Activated B cell treated with CpG ODN at 0.5 μM for 24 hours (primary cell): ENCODE measurements at regions of chr14 and their contacts with region 1.

Region 1: DNA sequence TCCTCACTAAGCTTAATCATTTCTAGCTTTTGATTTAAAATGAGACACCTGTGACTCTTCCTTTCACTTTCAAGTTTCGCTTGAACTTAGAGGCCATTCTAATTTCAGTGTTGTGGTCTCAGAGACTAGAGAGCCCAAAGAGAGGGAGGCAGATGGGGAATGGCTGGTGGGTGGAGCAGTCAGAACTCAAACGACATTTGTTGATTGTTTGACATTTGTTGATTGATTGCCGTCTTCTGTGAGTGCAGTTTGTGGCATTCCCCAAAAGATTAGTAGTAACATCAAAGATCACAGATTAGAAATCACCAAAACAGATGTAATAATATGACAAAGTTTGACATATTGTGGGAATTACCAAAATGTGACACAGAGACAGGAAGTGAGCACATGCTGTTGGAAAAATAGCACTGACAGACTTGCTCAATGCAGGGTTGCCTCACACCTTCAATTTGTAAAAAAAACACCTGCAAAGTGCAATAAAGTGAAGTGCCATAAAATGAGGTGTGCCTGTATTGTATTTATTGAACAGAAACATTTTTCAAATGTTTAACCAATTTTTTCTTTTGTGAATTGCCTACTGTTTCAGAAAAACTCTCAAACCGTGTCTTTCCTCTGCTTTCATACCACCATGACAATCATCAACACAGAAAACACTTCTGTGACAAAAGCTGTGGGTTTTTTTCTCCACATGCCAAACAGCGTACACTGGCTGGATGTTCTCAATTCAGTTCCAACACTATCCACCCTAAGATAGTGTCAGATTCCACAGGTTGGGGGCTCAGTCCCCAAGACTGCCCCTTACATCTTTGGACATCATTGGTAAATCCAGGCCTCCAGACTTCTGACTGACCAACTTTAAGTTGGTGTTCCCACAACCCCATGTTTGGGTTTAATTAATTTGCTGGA is 376.3 kb upstream of the RGS6 start:
- DNase-seq: no peak
- ATAC-seq: peak; percentile 94
- H3K4me3 Mint-ChIP-seq: peak overlapping the region; percentile 79
- H3K27ac Mint-ChIP-seq: peak overlapping the region; percentile 97
- H3K4me1 Mint-ChIP-seq: peaks cover 76% of the 10 kb centered on the region
- H3K27me3 Mint-ChIP-seq: no peaks in the 10 kb centered on the region
- CTCF ChIP-seq: no peak

Region 2: GRCh38 chr14:71497645-71498086 is 58.2 kb before region 1 on chr14:
- CTCF ChIA-PET with region 1: interaction called, 3 read pairs
- POLR2A ChIA-PET with region 1: interaction called, 3 read pairs
- intact Hi-C with region 1: loop called (anchors 2 kb)
- DNase-seq: no peak
- ATAC-seq: peak; percentile 87
- H3K4me3 Mint-ChIP-seq: peak overlapping the region; percentile 8
- H3K27ac Mint-ChIP-seq: peak overlapping the region; percentile 57
- H3K4me1 Mint-ChIP-seq: peaks cover 36% of the 10 kb centered on the region
- H3K27me3 Mint-ChIP-seq: no peaks in the 10 kb centered on the region
- CTCF ChIP-seq: no peak

Region 3: DNA sequence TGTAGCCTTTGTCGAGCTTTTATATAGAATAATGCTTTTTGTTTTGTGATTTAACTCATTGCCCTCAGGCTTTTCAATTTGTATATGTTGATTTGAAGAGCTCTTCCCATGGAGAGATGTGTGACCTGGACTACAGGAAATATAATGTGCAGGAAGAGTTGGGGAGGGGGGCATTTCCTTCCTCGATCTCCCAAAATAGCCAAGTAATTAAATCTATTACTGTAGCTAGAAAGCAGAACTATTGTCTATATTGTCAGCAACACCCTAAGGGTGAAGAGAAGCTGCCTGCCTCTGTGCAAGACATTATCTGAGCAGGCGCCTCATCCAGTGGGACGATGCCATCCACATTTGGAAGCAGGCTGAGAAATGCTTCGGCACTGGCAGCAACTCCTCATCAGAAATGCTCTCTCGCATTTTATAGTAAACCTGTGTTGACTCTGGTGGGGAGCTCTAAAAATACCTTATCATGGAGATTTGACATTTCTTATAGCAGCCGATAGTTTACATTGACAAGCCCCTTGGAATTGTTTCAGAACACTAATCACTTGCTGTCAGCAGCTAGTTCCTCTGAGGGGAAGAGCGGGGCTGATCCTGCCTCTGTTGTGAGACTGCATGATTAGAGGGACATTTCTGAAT is 16.1 kb before region 1 on chr14:
- CTCF ChIA-PET with region 1: interaction called, 4 read pairs
- POLR2A ChIA-PET with region 1: no interaction called
- intact Hi-C with region 1: loop called (anchors 2 kb)
- DNase-seq: no peak
- ATAC-seq: no peak
- H3K4me3 Mint-ChIP-seq: peak overlapping the region; percentile 53
- H3K27ac Mint-ChIP-seq: peak overlapping the region; percentile 38
- H3K4me1 Mint-ChIP-seq: peaks cover 58% of the 10 kb centered on the region
- H3K27me3 Mint-ChIP-seq: no peaks in the 10 kb centered on the region
- CTCF ChIP-seq: no peak

Region 4: DNA sequence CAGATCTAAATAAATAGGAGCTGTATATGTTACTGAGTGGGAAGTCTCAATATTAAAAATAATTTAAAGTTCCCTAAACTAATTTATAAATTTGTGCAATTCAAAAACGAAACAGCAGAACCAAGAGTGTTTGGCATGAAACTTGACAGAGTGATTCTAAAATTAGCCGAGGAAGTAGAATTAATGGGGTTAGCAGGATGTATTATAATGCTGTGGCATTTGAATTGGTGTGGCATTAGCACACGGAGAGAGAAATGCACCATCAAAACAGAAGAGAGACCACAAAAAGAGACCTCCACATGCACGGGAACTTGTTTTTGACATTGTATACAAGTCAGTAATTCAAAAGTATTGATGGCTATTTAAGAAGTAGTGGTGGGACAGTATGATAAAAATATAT is 10.4 kb after region 1 on chr14:
- CTCF ChIA-PET with region 1: no interaction called
- POLR2A ChIA-PET with region 1: interaction called, 8 read pairs
- intact Hi-C with region 1: loop called (anchors 1 kb)
- DNase-seq: no peak
- ATAC-seq: peak; percentile 81
- H3K4me3 Mint-ChIP-seq: peak overlapping the region; percentile 59
- H3K27ac Mint-ChIP-seq: peak overlapping the region; percentile 51
- H3K4me1 Mint-ChIP-seq: peaks cover 30% of the 10 kb centered on the region
- H3K27me3 Mint-ChIP-seq: no peaks in the 10 kb centered on the region
- CTCF ChIP-seq: no peak

Region 5: GRCh38 chr14:71597955-71598660 is 42.2 kb after region 1 on chr14:
- CTCF ChIA-PET with region 1: no interaction called
- POLR2A ChIA-PET with region 1: no interaction called
- intact Hi-C with region 1: loop called (anchors 1 kb)
- DNase-seq: no peak
- ATAC-seq: peak; percentile 95
- H3K4me3 Mint-ChIP-seq: peak overlapping the region; percentile 21
- H3K27ac Mint-ChIP-seq: peak overlapping the region; percentile 84
- H3K4me1 Mint-ChIP-seq: peaks cover 33% of the 10 kb centered on the region
- H3K27me3 Mint-ChIP-seq: no peaks in the 10 kb centered on the region
- CTCF ChIP-seq: no peak

Region 6: GRCh38 chr14:71618716-71619115 is 62.8 kb after region 1 on chr14:
- CTCF ChIA-PET with region 1: no interaction called
- POLR2A ChIA-PET with region 1: no interaction called
- intact Hi-C with region 1: loop called (anchors 1 kb)
- DNase-seq: no peak
- ATAC-seq: no peak
- H3K4me3 Mint-ChIP-seq: no peak overlapping the region
- H3K27ac Mint-ChIP-seq: peak overlapping the region; percentile 35
- H3K4me1 Mint-ChIP-seq: peaks cover 50% of the 10 kb centered on the region
- H3K27me3 Mint-ChIP-seq: no peaks in the 10 kb centered on the region
- CTCF ChIP-seq: no peak